ENCODE measurements at regions of chr15 and their contacts with region 1.

Region 1: GRCh38 chr15:37751401-37751800 is 183.0 kb upstream of the TMCO5A start:
- DNase-seq: no peak

Region 2: GRCh38 chr15:36722555-36722954 is 1028.8 kb before region 1 on chr15:
- intact Hi-C with region 1: no loop called
- DNase-seq: no peak

Region 3: GRCh38 chr15:37789881-37790280 is 38.5 kb after region 1 on chr15:
- intact Hi-C with region 1: no loop called
- DNase-seq: no peak

Region 4: DNA sequence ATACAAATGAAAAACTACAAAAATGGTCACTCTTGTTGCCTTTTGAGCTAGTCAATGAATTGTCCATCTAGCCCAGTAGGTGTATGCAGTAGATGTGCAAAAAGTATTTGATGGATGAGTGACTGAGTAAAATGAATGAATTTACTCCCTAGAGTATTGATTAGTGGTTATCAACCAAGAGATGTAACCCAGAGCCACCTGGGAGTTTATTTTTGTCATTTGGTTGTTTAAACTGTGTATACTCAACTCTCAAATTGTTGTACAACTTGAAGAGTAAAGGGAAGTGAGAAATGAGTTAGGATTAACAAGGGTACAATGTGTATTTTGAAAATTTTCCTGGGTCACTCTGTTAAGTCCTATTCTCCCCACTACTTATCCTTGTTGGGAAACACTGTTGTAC is 59.0 kb after region 1 on chr15:
- intact Hi-C with region 1: loop called in 1 of 2 experiments (anchors 2 kb)
- DNase-seq: no peak

Measured in posterior vena cava (tissue), 2 donors.